Ascending aorta (tissue), 2 donors: ENCODE measurements at regions of chr5 and their contacts with region 1.

Region 1: DNA sequence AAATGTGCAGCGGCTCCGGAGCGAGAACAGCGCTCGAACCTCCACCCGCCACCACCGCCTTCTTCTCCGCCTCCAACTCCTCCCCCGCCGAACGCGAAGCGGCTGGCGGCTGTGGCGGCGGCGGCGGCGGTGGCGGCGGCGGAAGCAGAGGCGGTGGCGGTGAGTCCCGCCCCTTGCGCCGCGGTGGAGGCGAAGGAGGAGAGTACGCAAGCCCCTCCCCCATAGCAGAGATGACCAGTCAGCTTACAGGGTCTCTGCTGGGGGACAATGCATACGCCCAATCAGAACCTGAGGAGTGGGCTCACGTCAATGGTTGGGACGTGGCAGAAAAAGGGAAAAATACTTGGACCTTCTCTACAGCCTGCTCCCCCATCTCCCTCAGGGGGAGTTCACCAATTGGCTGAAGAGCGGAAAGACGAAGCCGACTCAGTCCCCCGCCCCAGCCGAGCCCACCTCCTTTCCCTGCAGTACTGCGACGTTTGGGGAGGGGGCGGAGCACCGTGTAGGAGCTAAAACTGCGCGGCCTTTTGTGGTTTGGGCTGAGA is at the start of gene PJA2:
- DNase-seq: peak; percentile 99 to 100
- H3K4me3 ChIP-seq: peak within 1 kb of the TSS; percentile 86 to 94
- H3K27ac ChIP-seq: peak within 1 kb of the TSS; percentile 98
- H3K4me1 ChIP-seq: peaks cover 2 to 25% of the 10 kb centered on the region in 2 donors
- H3K27me3 ChIP-seq: no peaks in the 10 kb centered on the region
- CTCF ChIP-seq: peak; percentile 8 to 27 (median 17)
- total RNA-seq, gene PJA2: 56.1 TPM

Region 2: DNA sequence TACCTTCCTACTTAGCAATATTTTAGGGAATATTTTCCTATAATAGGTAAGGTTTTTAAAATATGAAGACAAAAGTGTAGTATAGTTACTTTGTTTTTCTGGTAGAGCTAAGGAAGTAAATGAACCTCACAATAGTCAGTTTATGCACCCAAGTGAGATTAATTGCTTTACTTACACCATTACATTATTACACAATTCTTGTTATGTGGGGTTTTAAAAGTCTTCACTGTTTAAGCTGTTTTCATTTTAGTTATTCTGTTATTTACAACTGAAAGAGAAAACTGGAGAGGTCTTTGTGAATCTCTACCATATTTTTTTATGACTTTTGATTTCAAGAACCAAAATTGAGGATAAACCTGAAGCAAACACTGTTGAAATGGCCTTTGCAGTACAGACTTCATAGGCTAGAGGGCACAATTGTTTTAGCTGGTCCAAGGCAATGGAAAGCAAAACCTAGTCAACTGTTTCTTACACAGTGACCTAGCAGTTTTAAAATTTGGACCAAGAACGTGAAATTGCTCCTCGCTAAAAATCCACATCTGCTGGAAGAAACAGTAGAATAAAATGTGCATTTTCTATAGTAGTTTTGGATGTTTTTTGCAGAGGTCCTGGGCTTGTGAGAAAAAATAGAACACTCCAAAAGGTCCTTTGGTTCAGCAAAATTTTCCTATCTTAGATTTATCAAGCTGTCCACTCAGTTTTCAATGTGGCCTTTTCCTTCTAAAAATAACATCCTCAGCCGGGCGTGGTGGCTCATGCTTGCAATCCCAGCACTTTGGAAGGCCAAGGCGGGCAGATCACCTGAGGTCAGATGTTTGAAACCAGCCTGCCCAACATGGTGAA is 728.6 kb before region 1 on chr5:
- intact Hi-C with region 1: loop called (anchors 10 kb)
- DNase-seq: no peak
- H3K4me3 ChIP-seq: peak overlapping the region in 1 of 2 donors; percentile 27
- H3K27ac ChIP-seq: peak overlapping the region; percentile 55 to 67
- H3K4me1 ChIP-seq: no peaks in the 10 kb centered on the region
- H3K27me3 ChIP-seq: no peaks in the 10 kb centered on the region
- CTCF ChIP-seq: peak; percentile 72 to 86 (median 83)

Region 3: GRCh38 chr5:109329333-109330237 is 80.3 kb before region 1 on chr5:
- intact Hi-C with region 1: loop called (anchors 5 kb)
- DNase-seq: no peak
- H3K4me3 ChIP-seq: no peak overlapping the region
- H3K27ac ChIP-seq: peak overlapping the region; percentile 50 to 61
- H3K4me1 ChIP-seq: peaks cover 0 to 26% of the 10 kb centered on the region in 2 donors
- H3K27me3 ChIP-seq: no peaks in the 10 kb centered on the region
- CTCF ChIP-seq: no peak

Region 4: DNA sequence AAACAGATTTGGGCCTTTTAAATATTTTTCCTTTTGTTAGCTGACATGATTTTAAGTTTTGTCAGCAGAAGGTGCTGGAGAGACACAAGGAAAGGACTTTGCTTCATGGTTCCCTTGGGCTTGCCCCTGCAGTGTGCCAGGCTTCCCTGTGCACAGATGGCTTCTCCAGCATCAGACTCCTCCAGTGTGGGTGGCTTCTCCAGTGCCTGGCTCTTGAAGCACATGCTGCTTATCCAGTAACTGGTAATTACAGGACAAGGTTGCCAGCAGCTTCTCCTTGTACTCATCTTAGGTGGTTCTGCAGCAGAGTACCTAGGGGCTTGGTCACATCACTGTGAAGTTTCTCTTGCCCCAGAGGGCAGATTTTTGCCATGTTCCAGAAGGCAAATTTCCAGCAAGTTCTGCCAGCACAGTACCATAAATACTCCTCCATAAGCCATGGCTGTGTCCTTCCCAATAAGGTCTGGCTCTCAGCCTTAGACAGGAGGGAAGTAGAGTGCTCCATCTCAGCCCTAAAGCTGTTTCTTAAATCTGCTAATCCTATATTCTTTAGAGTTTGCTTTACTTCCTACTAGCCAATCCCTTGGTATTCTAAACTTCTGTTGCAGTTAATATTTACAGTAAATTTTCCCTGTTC is 62.5 kb before region 1 on chr5:
- intact Hi-C with region 1: no loop called
- DNase-seq: no peak
- H3K4me3 ChIP-seq: no peak overlapping the region
- H3K27ac ChIP-seq: no peak overlapping the region
- H3K4me1 ChIP-seq: peaks cover 0 to 5% of the 10 kb centered on the region in 2 donors
- H3K27me3 ChIP-seq: no peaks in the 10 kb centered on the region
- CTCF ChIP-seq: no peak

Region 5: GRCh38 chr5:109468737-109469420 is 59.0 kb after region 1 on chr5:
- intact Hi-C with region 1: loop called (anchors 2 kb)
- DNase-seq: peak; percentile 86 to 97
- H3K4me3 ChIP-seq: no peak overlapping the region
- H3K27ac ChIP-seq: no peak overlapping the region
- H3K4me1 ChIP-seq: peaks cover 2 to 4% of the 10 kb centered on the region in 2 donors
- H3K27me3 ChIP-seq: no peaks in the 10 kb centered on the region
- CTCF ChIP-seq: peak; percentile 61 to 81 (median 79)

Region 6: GRCh38 chr5:109996246-109996645 is 586.3 kb after region 1 on chr5:
- intact Hi-C with region 1: loop called (anchors 5 kb)
- DNase-seq: no peak
- H3K4me3 ChIP-seq: no peak overlapping the region
- H3K27ac ChIP-seq: peak overlapping the region; percentile 57 to 60
- H3K4me1 ChIP-seq: peaks cover 15 to 38% of the 10 kb centered on the region in 2 donors
- H3K27me3 ChIP-seq: no peaks in the 10 kb centered on the region
- CTCF ChIP-seq: no peak